ENCODE measurements at regions of chr1 and their contacts with region 1.

Region 1: DNA sequence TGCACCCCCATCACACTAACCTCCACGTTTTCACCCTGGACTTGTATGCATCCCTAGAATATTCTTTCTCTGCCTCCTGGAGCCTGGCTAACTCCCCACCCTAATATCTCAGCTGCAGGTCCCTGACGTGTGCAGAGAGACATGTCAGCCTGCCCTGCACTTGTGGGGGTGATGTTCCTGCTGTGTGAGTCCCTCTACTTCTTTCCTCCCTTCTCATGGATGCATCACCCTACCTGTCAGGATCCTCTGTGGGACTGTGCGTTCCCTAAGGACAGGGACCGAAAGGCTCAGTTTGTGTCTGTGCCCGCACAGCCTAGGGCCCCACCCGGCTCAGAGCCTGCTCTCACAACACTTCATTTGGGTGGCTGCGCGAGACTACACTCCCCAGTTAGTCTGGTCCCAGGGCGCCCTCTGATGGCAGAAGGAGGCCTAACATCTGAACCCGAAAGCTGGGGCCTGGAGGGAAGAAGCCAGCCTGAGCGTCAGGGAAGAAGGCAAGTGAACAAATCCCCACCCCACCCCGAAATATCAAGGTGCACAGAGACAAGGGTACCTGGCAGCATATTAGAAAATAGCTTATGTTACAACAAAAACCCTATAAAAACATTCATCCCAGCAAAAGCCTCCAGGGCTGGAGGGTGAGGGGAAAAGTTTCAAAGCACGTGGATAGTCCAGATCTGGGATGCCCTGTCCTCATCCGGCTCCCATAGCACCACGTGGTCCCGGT is 3.7 kb downstream of the CD52 start:
- DNase-seq: peak; percentile 90
- H3K4me3 ChIP-seq: no peak overlapping the region
- H3K27ac ChIP-seq: no peak overlapping the region
- H3K4me1 ChIP-seq: no peaks in the 10 kb centered on the region
- H3K27me3 ChIP-seq: no peaks in the 10 kb centered on the region
- CTCF ChIP-seq: peak; percentile 93

Region 2: GRCh38 chr1:26083246-26083645 is 238.2 kb before region 1 on chr1:
- CTCF ChIA-PET with region 1: no interaction called
- POLR2A ChIA-PET with region 1: no interaction called
- intact Hi-C with region 1: no loop called
- DNase-seq: no peak
- H3K4me3 ChIP-seq: no peak overlapping the region
- H3K27ac ChIP-seq: no peak overlapping the region
- H3K4me1 ChIP-seq: no peaks in the 10 kb centered on the region
- H3K27me3 ChIP-seq: peaks cover 9% of the 10 kb centered on the region
- CTCF ChIP-seq: no peak

Region 3: DNA sequence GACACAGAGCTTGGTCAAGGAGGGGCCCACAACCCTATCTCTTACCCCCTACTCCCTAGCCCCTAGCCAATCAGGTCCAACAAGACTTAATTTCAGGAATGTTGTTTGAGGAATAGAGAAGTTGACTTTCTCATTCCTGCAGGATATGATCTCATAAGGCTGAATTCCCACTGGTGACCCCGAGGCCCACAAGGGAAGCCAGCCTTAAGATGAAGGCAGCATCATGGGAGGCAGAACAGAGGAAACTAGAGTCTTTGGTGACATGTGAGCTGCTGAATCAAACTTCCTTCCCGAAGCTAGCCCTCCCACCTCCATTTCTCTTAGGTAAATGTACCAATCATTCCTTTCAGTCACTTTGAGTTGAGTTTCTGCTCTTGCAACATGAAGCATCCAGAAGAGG is 219.0 kb before region 1 on chr1:
- CTCF ChIA-PET with region 1: no interaction called
- POLR2A ChIA-PET with region 1: no interaction called
- intact Hi-C with region 1: loop called (anchors 1 kb)
- DNase-seq: no peak
- H3K4me3 ChIP-seq: no peak overlapping the region
- H3K27ac ChIP-seq: no peak overlapping the region
- H3K4me1 ChIP-seq: no peaks in the 10 kb centered on the region
- H3K27me3 ChIP-seq: no peaks in the 10 kb centered on the region
- CTCF ChIP-seq: no peak

Region 4: GRCh38 chr1:26153966-26154532 is 167.4 kb before region 1 on chr1:
- CTCF ChIA-PET with region 1: no interaction called
- POLR2A ChIA-PET with region 1: no interaction called
- intact Hi-C with region 1: no loop called
- DNase-seq: no peak
- H3K4me3 ChIP-seq: no peak overlapping the region
- H3K27ac ChIP-seq: no peak overlapping the region
- H3K4me1 ChIP-seq: peaks cover 22% of the 10 kb centered on the region
- H3K27me3 ChIP-seq: no peaks in the 10 kb centered on the region
- CTCF ChIP-seq: no peak

Region 5: DNA sequence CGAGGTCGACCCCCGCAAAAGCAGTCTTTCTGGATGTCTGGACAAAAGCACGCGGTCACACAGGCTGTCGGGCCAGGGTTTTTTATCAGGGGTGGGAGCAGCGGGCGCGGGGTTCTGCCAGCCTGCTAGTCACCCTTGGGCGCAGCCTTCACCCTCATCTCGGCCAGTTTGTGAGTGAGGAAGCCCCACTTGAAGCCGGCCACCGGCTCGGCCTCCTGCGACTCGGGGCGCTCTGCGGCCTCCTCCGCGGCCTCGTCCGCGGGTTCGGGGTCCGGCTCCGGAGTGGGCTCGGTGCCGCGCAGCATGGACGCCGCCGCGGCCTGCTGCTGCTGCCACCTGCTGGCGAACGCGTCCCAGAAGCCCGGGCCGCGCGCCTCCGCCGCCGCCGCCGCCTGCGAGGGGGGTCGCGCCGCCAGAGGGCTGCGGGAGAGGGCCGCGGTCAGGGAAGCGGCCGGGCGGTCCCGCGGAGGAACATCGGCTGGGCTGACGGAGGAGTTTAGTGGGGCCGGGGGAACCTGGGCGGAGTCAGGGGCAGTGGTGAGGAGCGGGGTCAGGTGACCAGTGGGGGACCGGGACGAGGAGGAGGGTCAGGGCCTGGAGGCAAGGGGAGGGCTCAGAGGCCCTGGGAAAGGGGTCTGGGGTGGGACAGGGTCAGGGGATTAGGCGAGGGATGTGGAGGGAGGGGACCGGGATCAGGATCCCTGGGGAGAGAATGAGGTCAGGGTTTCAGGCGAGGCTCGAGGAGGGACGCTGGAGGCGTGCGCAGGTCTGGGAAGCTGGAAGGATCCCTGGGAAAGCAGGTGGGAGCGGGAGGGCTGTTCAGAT is 157.2 kb before region 1 on chr1:
- CTCF ChIA-PET with region 1: interaction called, 10 read pairs
- POLR2A ChIA-PET with region 1: no interaction called
- intact Hi-C with region 1: loop called (anchors 5 kb)
- DNase-seq: peak; percentile 62
- H3K4me3 ChIP-seq: peak overlapping the region; percentile 51
- H3K27ac ChIP-seq: peak overlapping the region; percentile 54
- H3K4me1 ChIP-seq: peaks cover 27% of the 10 kb centered on the region
- H3K27me3 ChIP-seq: no peaks in the 10 kb centered on the region
- CTCF ChIP-seq: peak; percentile 60; the same call in 1 of the 2 replicates

Region 6: GRCh38 chr1:26169669-26170471 is 151.6 kb before region 1 on chr1 and contains the start of gene ZNF593:
- CTCF ChIA-PET with region 1: interaction called, 10 read pairs
- POLR2A ChIA-PET with region 1: no interaction called
- intact Hi-C with region 1: loop called (anchors 5 kb)
- DNase-seq: peak; percentile 91
- H3K4me3 ChIP-seq: peak within 1 kb of the TSS; percentile 91
- H3K27ac ChIP-seq: peak within 1 kb of the TSS; percentile 94
- H3K4me1 ChIP-seq: peaks cover 17% of the 10 kb centered on the region
- H3K27me3 ChIP-seq: no peaks in the 10 kb centered on the region
- CTCF ChIP-seq: peak; percentile 96
- total RNA-seq, gene ZNF593: 61.9 and 62.3 TPM in 2 replicates

Region 7: GRCh38 chr1:26284597-26285360 is 36.7 kb before region 1 on chr1:
- CTCF ChIA-PET with region 1: interaction called, 4 read pairs
- POLR2A ChIA-PET with region 1: no interaction called
- intact Hi-C with region 1: loop called (anchors 1 kb)
- DNase-seq: peak; percentile 93
- H3K4me3 ChIP-seq: no peak overlapping the region
- H3K27ac ChIP-seq: peak overlapping the region; percentile 36
- H3K4me1 ChIP-seq: peaks cover 29% of the 10 kb centered on the region
- H3K27me3 ChIP-seq: no peaks in the 10 kb centered on the region
- CTCF ChIP-seq: peak; percentile 93